Naive thymus-derived CD4-positive, alpha-beta T cell (primary cell): ENCODE measurements at regions of chr10 and their contacts with region 1.

Region 1: GRCh38 chr10:5343562-5343961 is 21.2 kb upstream of the UCN3 start:
- DNase-seq: peak in 3 of 9 donors; percentile 5 to 18 (median 12)
- ATAC-seq: peak; percentile 44
- H3K4me3 ChIP-seq: no peak overlapping the region
- H3K4me3 Mint-ChIP-seq: no peak overlapping the region
- H3K27ac ChIP-seq: no peak overlapping the region
- H3K27ac Mint-ChIP-seq: no peak overlapping the region
- H3K4me1 ChIP-seq: no peaks in the 10 kb centered on the region
- H3K4me1 Mint-ChIP-seq: peaks cover 0 to 7% (median 4%) of the 10 kb centered on the region in 7 donors
- H3K27me3 ChIP-seq: no peaks in the 10 kb centered on the region
- H3K27me3 Mint-ChIP-seq: peaks cover 0 to 11% (median 0%) of the 10 kb centered on the region in 5 donors

Region 2: DNA sequence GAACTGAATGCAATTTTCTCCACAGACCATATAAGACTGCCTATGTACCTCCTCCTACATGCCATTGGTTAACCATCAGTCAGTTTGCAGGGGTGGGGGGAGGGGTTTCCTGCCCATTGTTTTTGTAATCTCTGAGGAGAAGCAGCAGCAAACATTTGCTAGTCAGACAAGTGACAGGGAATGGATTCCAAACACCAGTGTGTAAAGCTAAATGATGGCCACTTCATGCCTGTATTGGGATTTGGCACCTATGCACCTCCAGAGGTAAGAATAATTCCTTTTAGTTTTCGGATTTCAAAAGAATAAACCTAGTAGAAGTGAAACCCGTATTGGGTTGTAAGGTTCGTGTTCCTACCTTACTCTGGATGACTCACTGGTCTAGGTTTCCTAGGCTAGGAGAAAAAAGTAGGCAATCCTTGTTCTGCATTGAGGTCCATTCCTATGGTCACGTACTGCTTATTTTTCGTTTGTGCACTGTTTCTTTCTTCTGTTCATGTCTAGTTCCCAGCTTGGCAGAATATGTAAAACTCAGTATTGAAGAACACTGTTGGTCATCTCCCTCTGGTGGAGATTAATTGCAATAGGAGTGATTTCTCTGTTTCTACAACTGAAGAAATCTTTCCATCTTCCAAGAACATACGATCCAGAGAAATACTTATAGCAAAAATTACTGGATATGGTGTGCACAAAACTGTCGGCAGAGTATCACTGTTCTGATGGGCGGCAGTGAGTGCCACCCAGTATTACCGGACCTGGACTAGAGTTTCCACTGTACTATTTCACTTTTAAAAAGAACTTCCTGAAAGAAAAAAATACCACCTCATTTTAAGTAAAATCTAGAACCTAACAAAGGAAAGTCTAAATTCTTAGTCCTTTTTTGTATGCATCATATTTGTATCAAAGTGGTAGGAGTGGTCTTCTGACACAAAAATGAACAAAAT is 249.0 kb before region 1 on chr10 and contains the start of gene AKR1C3:
- CTCF ChIA-PET with region 1: no interaction called
- POLR2A ChIA-PET with region 1: no interaction called
- intact Hi-C with region 1: loop called in 1 of 2 experiments (anchors 1 kb)
- DNase-seq: peak in 6 of 9 donors; percentile 24 to 53 (median 36)
- ATAC-seq: peak; percentile 77
- H3K4me3 ChIP-seq: peak within 1 kb of the TSS; percentile 69
- H3K4me3 Mint-ChIP-seq: peak within 1 kb of the TSS; percentile 71 to 95 (median 91)
- H3K27ac ChIP-seq: no peak within 1 kb of the TSS
- H3K27ac Mint-ChIP-seq: peak within 1 kb of the TSS in 6 of 9 donors; percentile 35 to 90 (median 61)
- H3K4me1 ChIP-seq: no peaks in the 10 kb centered on the region
- H3K4me1 Mint-ChIP-seq: peaks cover 0 to 25% (median 15%) of the 10 kb centered on the region in 7 donors
- H3K27me3 ChIP-seq: no peaks in the 10 kb centered on the region
- H3K27me3 Mint-ChIP-seq: peaks cover 0 to 44% (median 13%) of the 10 kb centered on the region in 5 donors
- total RNA-seq, gene AKR1C3: 2.9 to 14.1 (median 5.8) TPM

Region 3: DNA sequence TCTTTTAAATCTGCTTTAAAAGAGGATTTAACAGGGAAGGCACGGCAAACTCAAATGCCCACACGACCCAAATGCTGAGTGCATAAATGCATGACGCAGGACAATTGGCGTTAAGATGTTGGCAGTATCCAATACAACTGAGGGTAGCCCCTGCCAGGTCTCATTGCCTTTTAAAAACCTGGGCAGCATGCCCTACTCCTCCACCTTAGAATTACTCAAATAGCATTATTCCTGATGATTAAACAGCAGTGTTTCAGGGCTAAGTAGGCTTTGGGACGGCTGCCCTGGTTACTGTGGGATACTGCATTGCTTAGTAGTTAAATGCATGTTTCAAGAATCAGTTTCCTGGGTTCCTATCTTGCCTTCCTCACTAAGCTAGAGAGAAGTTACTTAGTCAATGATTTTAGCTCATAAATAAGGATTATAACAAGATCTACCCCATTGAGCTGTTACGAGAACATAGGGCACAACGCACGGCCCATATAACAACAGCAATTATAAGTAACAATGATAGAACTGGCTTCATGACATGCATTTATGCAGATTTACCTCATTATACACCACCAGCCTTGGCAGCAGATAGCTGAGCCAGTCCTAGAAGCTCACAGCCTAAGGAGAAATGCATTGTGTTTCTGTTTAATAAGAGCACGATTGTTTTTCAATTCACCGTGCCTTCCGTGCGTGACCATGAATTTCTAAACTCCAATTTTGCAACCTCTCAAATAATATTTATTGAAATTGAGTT is 53.2 kb after region 1 on chr10:
- CTCF ChIA-PET with region 1: no interaction called
- POLR2A ChIA-PET with region 1: no interaction called
- intact Hi-C with region 1: no loop called
- DNase-seq: no peak
- ATAC-seq: no peak
- H3K4me3 ChIP-seq: no peak overlapping the region
- H3K4me3 Mint-ChIP-seq: no peak overlapping the region
- H3K27ac ChIP-seq: no peak overlapping the region
- H3K27ac Mint-ChIP-seq: no peak overlapping the region
- H3K4me1 ChIP-seq: no peaks in the 10 kb centered on the region
- H3K4me1 Mint-ChIP-seq: no peaks in the 10 kb centered on the region
- H3K27me3 ChIP-seq: no peaks in the 10 kb centered on the region
- H3K27me3 Mint-ChIP-seq: peaks cover 12 to 25% (median 15%) of the 10 kb centered on the region in 5 donors

Region 4: DNA sequence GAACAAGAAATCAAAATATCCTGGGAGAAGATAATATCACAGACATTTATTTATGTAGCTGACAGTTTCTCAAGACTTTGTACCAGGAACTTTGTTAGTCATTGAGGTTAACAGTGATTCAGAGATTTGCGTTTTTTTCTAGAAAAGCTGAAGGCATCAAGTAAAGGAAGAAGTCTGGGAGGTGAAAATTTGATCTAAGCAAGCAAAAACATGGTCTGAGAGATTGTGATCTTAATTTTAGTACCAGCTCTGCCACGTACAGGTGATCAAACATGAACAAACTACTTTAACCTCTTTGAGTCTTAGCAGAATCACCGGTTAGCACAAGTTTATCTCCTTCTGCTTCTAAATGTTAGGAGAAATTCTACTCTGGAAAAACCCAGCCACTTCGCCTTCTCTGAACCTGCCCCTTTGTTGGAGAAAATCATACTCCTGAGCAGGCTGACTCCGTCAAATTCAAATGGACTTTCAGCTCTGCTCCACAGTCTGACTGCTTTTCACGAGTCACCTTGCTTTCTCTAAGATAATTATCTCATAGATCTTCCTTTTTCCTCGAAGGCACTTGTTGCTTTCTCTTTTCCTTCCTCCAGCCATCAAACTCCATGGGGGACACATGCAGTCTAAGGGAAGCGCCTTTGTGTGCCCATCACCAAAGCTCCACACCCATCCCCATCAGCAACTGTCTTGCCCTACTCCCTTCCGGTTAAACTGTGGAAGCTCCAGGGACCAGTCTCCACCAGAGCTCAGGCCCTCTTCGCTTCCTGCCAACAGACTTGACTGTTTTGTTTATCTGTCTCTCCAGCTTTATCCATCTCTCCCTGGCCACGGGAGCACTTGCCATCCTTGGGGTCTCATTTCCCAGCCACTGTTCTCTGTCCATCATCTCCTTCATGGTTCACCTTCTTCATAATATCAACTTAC is 1150.2 kb after region 1 on chr10:
- CTCF ChIA-PET with region 1: no interaction called
- POLR2A ChIA-PET with region 1: no interaction called
- intact Hi-C with region 1: no loop called
- DNase-seq: no peak
- ATAC-seq: peak; percentile 10
- H3K4me3 ChIP-seq: no peak overlapping the region
- H3K4me3 Mint-ChIP-seq: no peak overlapping the region
- H3K27ac ChIP-seq: peak overlapping the region; percentile 71
- H3K27ac Mint-ChIP-seq: no peak overlapping the region
- H3K4me1 ChIP-seq: peaks cover 34 to 81% of the 10 kb centered on the region in 2 donors
- H3K4me1 Mint-ChIP-seq: peaks cover 5 to 45% (median 27%) of the 10 kb centered on the region in 7 donors
- H3K27me3 ChIP-seq: no peaks in the 10 kb centered on the region
- H3K27me3 Mint-ChIP-seq: no peaks in the 10 kb centered on the region